KBM-7 (cell line): ENCODE measurements at regions of chr18 and their contacts with region 1.

Region 1: GRCh38 chr18:12092398-12093229 is 1.0 kb upstream of the ANKRD62 start:
- DNase-seq: peak; percentile 61

Region 2: GRCh38 chr18:12236934-12237832 is 144.6 kb after region 1 on chr18:
- in situ Hi-C with region 1: loop called (anchors 10 kb)
- DNase-seq: peak; percentile 86